Dorsolateral prefrontal cortex (tissue), 120 donors: ENCODE measurements at regions of chr3 and their contacts with region 1.

Region 1: GRCh38 chr3:141452036-141452435 is 34.8 kb upstream of the RASA2 start:
- DNase-seq: no peak
- H3K4me3 ChIP-seq: no peak overlapping the region
- H3K27ac ChIP-seq: peak overlapping the region in 32 of 59 donors; percentile 0 to 75 (median 30)
- H3K27me3 ChIP-seq: no peaks in the 10 kb centered on the region
- CTCF ChIP-seq: peak; percentile 11 to 88 (median 68)

Region 2: GRCh38 chr3:141231101-141231935 is 220.7 kb before region 1 on chr3 and contains the start of gene PXYLP1:
- intact Hi-C with region 1: loop called in 1 of 2 experiments (anchors 5 kb)
- DNase-seq: peak; percentile 84 to 95 (median 91)
- H3K4me3 ChIP-seq: peak within 1 kb of the TSS; percentile 66 to 99 (median 84)
- H3K27ac ChIP-seq: peak within 1 kb of the TSS in 58 of 59 donors; percentile 29 to 95 (median 90)
- H3K27me3 ChIP-seq: no peaks in the 10 kb centered on the region
- CTCF ChIP-seq: peak; percentile 18 to 87 (median 69)
- total RNA-seq, gene PXYLP1: 19.8 to 55.1 (median 36.4) TPM

Region 3: GRCh38 chr3:141303481-141304223 is 148.4 kb before region 1 on chr3:
- intact Hi-C with region 1: loop called in 1 of 2 experiments (anchors 1 kb)
- DNase-seq: peak in 2 of 10 donors; percentile 58 to 60
- H3K4me3 ChIP-seq: peak overlapping the region in 1 of 59 donors; percentile 2
- H3K27ac ChIP-seq: peak overlapping the region in 9 of 59 donors; percentile 1 to 52 (median 25)
- H3K27me3 ChIP-seq: no peaks in the 10 kb centered on the region
- CTCF ChIP-seq: peak; percentile 70 to 99 (median 88)

Region 4: DNA sequence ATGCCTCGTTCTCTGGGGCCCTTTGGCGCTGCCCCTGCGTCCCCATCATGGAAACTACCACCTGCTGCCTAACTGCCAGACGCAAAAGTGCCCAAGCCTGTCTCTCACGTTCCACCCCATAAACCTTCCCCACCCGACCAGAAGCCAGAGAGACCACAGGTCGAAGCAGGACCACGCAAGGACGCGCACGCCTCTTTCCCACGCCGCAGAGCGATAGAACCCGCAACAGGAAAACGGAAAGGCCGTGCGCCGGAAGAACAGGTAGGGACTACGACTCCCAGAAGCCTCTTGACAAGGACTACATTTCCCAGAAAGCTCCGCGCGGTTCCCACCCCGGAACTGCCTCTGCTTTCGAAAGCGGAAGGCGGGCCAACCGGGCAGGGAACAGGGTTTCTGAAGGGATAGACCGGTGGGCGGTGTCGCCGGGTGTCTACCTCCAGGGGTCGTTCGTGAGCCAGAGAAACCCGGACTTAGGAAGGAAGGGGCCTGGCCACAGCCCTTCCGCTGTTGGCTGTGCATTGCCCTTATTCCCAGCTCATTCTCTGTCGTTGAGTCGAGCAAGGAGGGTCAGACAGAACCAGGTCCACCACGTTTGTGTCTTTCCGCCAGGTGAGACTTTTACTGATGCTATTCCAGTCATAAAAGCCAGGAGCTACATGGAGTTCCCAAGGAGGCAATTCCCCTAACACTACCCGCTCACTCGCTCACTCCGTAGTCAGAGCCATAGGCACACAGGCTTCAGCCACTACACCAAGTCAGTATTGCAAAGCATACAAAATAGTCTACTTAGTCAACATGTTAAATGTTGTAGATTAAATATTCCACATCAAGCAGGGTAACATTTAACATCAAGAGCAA is 140.3 kb before region 1 on chr3:
- intact Hi-C with region 1: loop called in 1 of 2 experiments (anchors 2 kb)
- DNase-seq: peak; percentile 97 to 99 (median 98)
- H3K4me3 ChIP-seq: peak overlapping the region; percentile 54 to 94 (median 75)
- H3K27ac ChIP-seq: peak overlapping the region; percentile 36 to 95 (median 83)
- H3K27me3 ChIP-seq: no peaks in the 10 kb centered on the region
- CTCF ChIP-seq: peak; percentile 50 to 92 (median 82)

Region 5: GRCh38 chr3:141360888-141361598 is 91.0 kb before region 1 on chr3:
- intact Hi-C with region 1: loop called (anchors 2 to 5 kb)
- DNase-seq: no peak
- H3K4me3 ChIP-seq: peak overlapping the region in 38 of 59 donors; percentile 1 to 53 (median 32)
- H3K27ac ChIP-seq: peak overlapping the region in 49 of 59 donors; percentile 1 to 82 (median 55)
- H3K27me3 ChIP-seq: no peaks in the 10 kb centered on the region
- CTCF ChIP-seq: peak; percentile 47 to 91 (median 83)

Region 6: GRCh38 chr3:141370065-141370533 is 81.9 kb before region 1 on chr3:
- intact Hi-C with region 1: loop called in 1 of 2 experiments (anchors 5 kb)
- DNase-seq: peak in 3 of 10 donors; percentile 31 to 76 (median 53)
- H3K4me3 ChIP-seq: peak overlapping the region in 39 of 59 donors; percentile 5 to 68 (median 49)
- H3K27ac ChIP-seq: peak overlapping the region in 57 of 59 donors; percentile 38 to 99 (median 96)
- H3K27me3 ChIP-seq: no peaks in the 10 kb centered on the region
- CTCF ChIP-seq: peak in 51 of 56 donors; percentile 15 to 64 (median 45)

Region 7: DNA sequence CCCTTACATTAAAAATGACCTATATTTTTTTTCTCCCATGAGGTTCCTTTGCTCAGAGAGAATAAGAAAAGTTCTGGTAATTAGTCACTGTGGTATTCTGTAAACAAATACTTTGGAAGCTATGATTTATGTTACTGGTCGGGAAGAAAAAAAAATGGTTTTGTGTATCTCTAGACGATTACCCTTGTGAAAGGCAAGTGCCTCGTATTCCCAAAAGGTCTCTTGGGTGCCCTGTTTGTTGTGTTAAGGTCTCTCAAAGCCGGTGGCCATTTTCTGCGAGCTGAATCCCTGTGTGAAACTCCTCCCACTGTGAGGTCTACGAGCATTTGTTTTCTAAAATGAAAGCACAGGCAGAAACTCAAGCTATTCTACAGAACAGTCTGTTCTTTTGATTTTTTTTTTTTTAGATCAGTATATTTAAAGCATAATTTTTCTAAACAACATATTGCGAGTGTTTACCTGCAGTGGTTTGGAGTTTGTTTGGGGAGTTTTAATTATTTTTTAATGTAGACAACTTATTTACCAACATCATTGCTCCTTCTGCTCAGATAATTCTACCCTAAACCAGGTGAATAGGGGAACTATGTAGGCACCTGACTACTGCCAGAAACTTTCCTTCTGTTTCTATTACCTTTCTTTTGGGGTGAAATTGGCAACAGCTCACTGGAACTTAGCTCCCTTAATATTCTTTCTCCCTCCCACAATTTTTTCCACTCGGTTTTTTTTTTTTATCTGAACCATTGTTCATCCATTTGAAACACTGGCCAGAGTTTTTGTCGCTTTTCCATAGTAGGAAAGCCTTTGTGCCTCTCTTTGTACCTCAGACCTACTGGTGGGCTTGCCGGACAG is 39.7 kb before region 1 on chr3:
- intact Hi-C with region 1: loop called (anchors 5 kb)
- DNase-seq: peak in 4 of 10 donors; percentile 46 to 74 (median 64)
- H3K4me3 ChIP-seq: peak overlapping the region; percentile 11 to 70 (median 49)
- H3K27ac ChIP-seq: peak overlapping the region; percentile 82 to 99 (median 97)
- H3K27me3 ChIP-seq: no peaks in the 10 kb centered on the region
- CTCF ChIP-seq: no peak

Region 8: GRCh38 chr3:141465221-141465620 is 13.2 kb after region 1 on chr3:
- intact Hi-C with region 1: no loop called
- DNase-seq: no peak
- H3K4me3 ChIP-seq: no peak overlapping the region
- H3K27ac ChIP-seq: no peak overlapping the region
- H3K27me3 ChIP-seq: no peaks in the 10 kb centered on the region
- CTCF ChIP-seq: peak in 45 of 56 donors; percentile 17 to 66 (median 43)